Activated naive CD4-positive, alpha-beta T cell treated with anti-CD3 and anti-CD28 coated beads for 36 hours (primary cell): ENCODE measurements at regions of chrX and their contacts with region 1.

Region 1: DNA sequence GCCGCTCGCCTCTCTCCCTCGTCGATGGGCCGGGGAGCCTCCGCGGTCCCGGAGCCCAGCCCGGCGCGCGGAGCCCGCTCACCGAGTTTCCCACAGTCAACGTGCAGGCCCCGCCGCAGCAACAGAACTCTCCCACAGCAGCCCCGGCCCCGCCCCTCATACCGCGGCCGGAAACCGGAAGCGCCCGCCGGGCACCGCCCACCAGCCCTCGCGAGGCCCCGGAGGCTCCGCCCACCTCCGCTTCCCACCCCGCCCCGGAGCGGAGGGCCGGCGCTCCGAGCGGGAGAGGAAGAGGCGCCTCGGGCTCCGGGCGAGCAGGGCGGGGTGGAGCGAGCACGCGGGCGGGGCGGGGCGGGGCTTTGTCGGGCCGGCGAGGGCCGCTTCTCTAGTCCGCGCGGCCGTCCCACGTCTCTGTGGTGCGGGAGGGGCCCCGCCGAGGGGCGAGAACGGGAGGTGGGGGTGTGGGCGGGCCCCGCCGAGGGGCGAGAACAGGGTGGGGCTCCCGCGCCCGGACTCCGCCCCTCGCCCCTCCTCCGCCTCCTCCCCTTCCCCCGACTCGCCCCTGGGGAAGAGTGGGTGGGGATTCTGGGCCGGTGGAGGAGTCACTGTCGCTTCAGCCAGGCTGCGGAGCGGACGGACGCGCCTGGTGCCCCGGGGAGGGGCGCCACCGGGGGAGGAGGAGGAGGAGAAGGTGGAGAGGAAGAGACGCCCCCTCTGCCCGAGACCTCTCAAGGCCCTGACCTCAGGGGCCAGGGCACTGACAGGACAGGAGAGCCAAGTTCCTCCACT is at the starts of genes ABCD1 and BCAP31:
- DNase-seq: peak; percentile 88
- H3K4me3 Mint-ChIP-seq: peak within 1 kb of the TSS; percentile 85
- H3K27ac Mint-ChIP-seq: peak within 1 kb of the TSS; percentile 81
- H3K4me1 Mint-ChIP-seq: peaks cover 25% of the 10 kb centered on the region
- H3K27me3 Mint-ChIP-seq: no peaks in the 10 kb centered on the region
- total RNA-seq, gene ABCD1: 2.5 to 3.4 TPM
- total RNA-seq, gene BCAP31: 69.5 to 71.2 TPM

Region 2: DNA sequence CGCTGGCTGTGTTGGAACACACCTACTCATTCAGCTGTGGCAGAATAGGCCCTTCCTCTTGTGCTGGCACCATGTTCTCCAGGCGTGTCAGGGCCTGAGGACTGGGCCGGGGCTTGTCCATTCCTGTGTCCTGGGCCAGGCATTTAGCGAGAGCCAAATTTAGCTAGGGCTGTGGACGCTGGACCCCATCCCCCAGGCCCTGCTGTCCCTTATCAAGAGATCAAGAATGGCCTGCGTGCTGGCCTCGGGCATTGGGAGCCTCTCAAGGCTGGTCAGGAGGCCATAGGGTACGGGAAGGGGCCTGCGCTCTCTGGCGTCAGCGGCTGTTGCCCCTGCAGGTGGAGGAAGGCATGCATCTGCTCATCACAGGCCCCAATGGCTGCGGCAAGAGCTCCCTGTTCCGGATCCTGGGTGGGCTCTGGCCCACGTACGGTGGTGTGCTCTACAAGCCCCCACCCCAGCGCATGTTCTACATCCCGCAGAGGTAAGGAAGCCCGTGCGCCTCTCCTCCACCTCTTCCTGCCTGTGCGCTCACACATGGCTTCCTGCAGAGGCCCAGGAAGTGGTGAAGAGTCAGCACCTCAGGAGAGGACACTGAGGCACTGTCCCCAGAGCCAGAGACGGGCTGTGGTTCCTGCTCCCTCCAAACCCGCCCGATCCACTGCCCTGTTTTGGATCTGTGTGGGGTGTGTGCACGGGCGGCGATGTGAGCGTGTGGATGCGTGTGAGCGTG is 15.5 kb after region 1 on chrX:
- CTCF ChIA-PET with region 1: no interaction called
- intact Hi-C with region 1: loop called (anchors 2 kb)
- DNase-seq: peak; percentile 55
- H3K4me3 Mint-ChIP-seq: peak overlapping the region; percentile 34
- H3K27ac Mint-ChIP-seq: peak overlapping the region; percentile 26
- H3K4me1 Mint-ChIP-seq: peaks cover 26% of the 10 kb centered on the region
- H3K27me3 Mint-ChIP-seq: peaks cover 5% of the 10 kb centered on the region